ENCODE measurements at regions of chr9 and their contacts with region 1.

Region 1: DNA sequence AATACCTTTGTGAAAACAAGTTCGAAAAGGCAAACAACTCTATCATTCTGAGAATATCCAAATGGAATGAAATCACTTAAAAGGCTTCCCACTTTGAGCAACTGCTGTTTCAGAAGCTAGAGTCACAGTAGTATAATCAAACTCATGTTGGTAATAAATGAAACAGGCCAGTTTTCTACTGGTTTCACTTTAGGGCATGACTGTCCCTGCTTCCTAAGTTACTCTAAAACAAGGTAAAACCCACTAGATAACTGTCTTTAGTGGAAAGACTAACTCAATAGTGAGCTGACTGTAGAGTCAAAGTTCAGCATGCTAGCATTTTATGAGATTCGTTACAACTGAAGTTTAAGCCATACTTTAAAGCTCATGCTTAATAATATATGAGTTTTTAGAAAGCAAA is 6.0 kb downstream of the CDC26 start:
- DNase-seq: no peak
- H3K4me3 ChIP-seq: no peak overlapping the region
- H3K27ac ChIP-seq: no peak overlapping the region
- H3K4me1 ChIP-seq: peaks cover 4% of the 10 kb centered on the region
- H3K27me3 ChIP-seq: no peaks in the 10 kb centered on the region
- CTCF ChIP-seq: no peak
- POLR2A ChIP-seq: no peak

Region 2: GRCh38 chr9:113221003-113221799 is 48.2 kb before region 1 on chr9 and contains the starts of genes FKBP15 and SLC31A1:
- intact Hi-C with region 1: loop called (anchors 5 kb)
- DNase-seq: peak; percentile 99
- H3K4me3 ChIP-seq: peak within 1 kb of the TSS; percentile 63 to 83
- H3K27ac ChIP-seq: peak within 1 kb of the TSS; percentile 69 to 80
- H3K4me1 ChIP-seq: peaks cover 12% of the 10 kb centered on the region
- H3K27me3 ChIP-seq: no peaks in the 10 kb centered on the region
- CTCF ChIP-seq: no peak
- POLR2A ChIP-seq: peak; percentile 33
- total RNA-seq, gene FKBP15: 23.1 to 23.5 TPM
- total RNA-seq, gene SLC31A1: 12.3 to 21.9 TPM